Activated CD4-positive, alpha-beta T cell treated with anti-CD3 and anti-CD28 coated beads, Interleukin-2, amount 10 ng/mL, durations not matched to agents 24 days and 14 days (primary cell): ENCODE measurements at regions of chr16 and their contacts with region 1.

Region 1: GRCh38 chr16:3503523-3503922 is 2.7 kb downstream of the CLUAP1 start:
- DNase-seq: peak; percentile 92
- H3K4me3 Mint-ChIP-seq: peak overlapping the region; percentile 80
- H3K27ac Mint-ChIP-seq: peak overlapping the region; percentile 97
- H3K4me1 Mint-ChIP-seq: peaks cover 57% of the 10 kb centered on the region
- H3K27me3 Mint-ChIP-seq: no peaks in the 10 kb centered on the region

Region 2: DNA sequence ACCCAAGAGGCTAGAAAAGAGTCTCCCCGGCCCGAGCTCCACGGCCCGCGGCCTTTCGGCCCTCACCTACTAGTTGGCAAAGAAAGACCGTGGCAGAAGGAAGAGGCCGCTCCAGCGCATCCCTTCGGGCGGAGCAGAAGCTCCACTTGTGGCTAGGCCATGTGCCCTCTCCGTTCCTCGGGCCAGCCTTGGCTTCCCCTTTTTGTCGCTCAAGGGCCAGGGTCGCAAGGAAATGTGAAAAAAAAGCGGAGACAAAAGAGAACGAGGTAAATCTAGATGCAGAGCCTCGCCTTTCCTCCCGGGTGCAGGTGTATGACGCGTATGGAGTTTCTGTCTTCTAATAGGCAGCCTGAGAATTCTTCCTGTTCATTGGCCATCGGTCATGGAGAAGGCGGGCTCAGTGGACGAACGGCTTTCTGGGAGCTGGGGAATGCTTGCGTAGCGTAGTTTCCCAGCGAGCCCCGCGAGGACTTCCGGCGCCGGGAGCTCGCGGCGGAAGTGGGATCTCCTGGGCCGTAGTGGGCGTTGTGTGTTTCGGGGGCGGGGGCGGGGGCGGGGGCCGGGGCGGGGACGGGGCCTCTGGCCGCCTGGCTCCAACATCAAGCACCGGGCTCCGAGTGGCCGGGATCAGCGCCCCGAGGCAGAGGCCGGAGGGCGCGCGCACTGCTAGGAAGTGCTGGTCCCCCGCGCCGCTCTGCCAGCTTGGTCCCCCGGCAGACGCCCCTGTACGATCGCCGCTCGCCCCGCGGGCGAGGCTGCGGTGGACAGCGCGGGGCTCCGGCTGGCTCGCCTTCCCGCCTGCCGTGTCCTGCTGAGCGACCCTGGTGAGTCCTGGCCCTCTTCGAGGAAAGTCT is 368.7 kb before region 1 on chr16 and contains the start of gene ZNF213:
- intact Hi-C with region 1: loop called (anchors 5 kb)
- DNase-seq: peak; percentile 98
- H3K4me3 Mint-ChIP-seq: peak within 1 kb of the TSS; percentile 99
- H3K27ac Mint-ChIP-seq: peak within 1 kb of the TSS; percentile 97
- H3K4me1 Mint-ChIP-seq: peaks cover 26% of the 10 kb centered on the region
- H3K27me3 Mint-ChIP-seq: no peaks in the 10 kb centered on the region
- total RNA-seq, gene ZNF213: 9.5 and 10.6 TPM in 2 replicates

Region 3: DNA sequence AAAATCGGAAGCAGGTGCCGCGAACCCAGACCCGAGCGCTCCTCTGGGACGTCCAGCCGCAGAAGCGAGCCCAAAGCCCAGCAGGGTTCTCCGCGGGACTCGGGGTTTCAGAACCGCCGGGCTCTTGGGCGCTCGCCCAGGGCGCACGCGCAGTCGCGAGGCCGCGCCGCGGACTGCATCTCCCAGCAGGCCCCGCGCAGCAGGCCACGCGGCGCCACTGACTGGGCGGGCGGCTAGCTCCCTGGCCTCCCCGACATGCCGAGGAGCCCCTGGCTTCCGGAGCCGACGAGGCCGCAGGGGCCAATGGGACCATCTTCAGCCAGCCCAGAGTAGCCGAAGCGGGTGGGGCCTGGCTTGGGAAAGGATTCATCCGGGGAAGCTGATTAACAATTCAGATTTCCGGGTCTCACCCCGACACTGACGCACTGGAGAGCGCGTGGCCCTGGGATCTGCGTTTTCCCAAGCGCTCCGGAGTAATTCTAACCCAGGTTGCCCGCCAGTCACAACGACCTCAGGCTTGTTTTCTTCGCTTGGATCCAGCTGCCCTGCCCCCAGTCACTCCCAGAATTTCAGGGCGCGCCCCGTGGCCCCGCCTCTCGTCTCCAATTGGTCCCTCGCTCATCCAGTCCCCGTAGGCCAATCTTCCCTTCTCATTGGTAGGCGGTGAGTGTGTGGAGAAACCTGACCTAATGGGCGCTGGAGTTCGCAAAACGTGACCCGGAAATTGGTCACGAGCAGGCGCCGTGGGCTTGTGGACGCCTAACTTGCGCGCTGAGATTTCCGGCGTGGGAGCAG is 220.6 kb before region 1 on chr16 and contains the start of gene ZNF263:
- intact Hi-C with region 1: loop called (anchors 2 kb)
- DNase-seq: peak; percentile 98
- H3K4me3 Mint-ChIP-seq: peak within 1 kb of the TSS; percentile 88
- H3K27ac Mint-ChIP-seq: peak within 1 kb of the TSS; percentile 98
- H3K4me1 Mint-ChIP-seq: peaks cover 18% of the 10 kb centered on the region
- H3K27me3 Mint-ChIP-seq: peaks cover 4% of the 10 kb centered on the region
- total RNA-seq, gene ZNF263: 27.0 and 31.3 TPM in 2 replicates

Region 4: GRCh38 chr16:3400779-3401688 is 102.5 kb before region 1 on chr16 and contains the starts of genes ZNF174 and ZSCAN32:
- intact Hi-C with region 1: loop called (anchors 5 kb)
- DNase-seq: peak; percentile 100
- H3K4me3 Mint-ChIP-seq: peak within 1 kb of the TSS; percentile 90
- H3K27ac Mint-ChIP-seq: peak within 1 kb of the TSS; percentile 86
- H3K4me1 Mint-ChIP-seq: peaks cover 20% of the 10 kb centered on the region
- H3K27me3 Mint-ChIP-seq: no peaks in the 10 kb centered on the region
- total RNA-seq, gene ZNF174: 10.1 and 11.4 TPM in 2 replicates
- total RNA-seq, gene ZSCAN32: 16.8 and 17.9 TPM in 2 replicates

Region 5: DNA sequence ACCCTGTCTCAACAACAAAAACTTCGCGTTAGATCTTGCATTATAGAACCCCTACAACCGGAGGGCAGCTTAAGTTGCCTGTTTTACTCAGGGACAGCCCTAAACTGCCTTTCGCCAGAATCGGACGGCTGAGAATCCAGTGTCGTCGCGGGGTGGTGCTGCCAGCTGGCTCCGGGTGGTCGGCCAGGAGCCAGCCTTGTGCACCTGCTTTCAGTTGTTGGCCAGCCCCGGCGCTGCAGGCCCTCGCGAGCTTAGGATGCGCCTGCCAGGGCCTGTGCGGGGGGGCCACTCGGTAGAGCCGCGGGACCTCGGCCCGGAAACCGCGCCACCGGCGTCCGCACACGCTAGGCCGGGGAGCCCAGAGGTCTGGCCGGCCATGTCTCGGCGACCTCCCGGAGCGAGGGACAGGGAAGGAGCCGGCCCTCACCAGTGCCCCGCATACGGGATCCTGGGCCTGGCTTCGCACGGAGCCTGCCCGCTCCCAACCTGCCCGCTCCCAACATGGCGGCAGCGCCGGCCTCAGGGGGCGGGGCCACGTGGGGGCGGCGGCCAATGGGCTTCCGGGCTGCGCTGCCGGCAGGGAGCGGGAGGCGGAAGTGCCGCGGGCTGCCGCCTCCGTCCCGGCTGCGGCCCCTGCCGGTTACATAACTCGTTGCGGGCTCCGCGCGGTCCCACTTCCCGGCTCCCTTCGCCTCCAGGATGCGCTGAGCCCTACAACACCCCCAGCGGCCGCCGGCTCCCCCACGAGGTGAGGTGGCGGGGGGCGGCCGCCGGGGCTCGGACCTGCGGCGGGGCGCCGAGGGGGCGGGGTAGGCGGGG is 45.9 kb before region 1 on chr16:
- intact Hi-C with region 1: loop called (anchors 2 kb)
- DNase-seq: peak; percentile 97
- H3K4me3 Mint-ChIP-seq: peak overlapping the region; percentile 85
- H3K27ac Mint-ChIP-seq: peak overlapping the region; percentile 84
- H3K4me1 Mint-ChIP-seq: peaks cover 39% of the 10 kb centered on the region
- H3K27me3 Mint-ChIP-seq: no peaks in the 10 kb centered on the region

Region 6: DNA sequence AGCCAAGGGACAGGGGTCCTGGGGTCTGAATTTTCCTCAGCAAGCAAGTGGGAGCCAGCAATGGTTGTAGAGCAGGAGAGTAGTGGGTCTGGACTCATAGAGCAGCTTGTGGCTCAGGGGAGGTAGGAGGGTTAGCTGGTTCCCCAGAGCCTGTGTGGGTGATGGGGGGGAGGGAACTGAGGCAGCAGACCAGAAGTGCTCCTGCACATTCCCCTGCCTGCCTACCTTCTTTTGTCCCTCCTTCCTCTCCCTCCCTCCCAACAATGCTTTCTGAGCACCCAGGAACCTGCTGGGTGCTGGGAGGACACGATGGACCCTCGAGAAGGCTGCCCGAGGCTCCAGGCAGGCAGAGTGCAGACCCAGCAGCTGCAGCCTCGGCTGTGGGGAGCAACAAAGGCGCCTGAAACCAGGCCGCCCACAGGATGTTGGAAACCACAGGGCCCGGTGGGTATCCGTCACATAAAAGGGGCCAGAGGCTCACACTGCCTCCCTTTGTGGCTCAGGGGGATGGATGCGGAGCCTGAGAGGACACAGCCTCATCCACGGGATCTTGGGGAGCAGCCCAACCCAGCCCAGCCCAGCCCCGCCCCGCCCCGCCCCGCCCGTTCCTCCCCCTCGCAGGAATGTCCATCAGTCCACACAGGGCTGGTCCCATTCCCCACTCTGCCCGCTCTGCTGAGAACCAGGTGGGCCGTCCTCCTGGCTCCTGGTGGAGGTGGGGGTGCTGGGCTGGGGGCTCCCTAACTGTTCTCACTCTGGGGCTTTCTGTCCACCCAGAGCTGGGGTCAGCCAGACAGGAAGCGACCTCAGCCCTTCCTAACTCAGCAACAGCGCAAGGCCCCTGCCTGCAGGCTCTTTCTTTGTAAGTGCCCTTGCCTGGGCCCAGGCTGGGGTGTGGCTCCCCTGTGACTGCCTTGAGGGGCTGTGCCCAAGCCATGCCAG is 75.4 kb after region 1 on chr16:
- intact Hi-C with region 1: loop called (anchors 5 kb)
- DNase-seq: peak; percentile 91
- H3K4me3 Mint-ChIP-seq: peak overlapping the region; percentile 98
- H3K27ac Mint-ChIP-seq: peak overlapping the region; percentile 96
- H3K4me1 Mint-ChIP-seq: peaks cover 36% of the 10 kb centered on the region
- H3K27me3 Mint-ChIP-seq: no peaks in the 10 kb centered on the region

Region 7: GRCh38 chr16:3602320-3602653 is 98.8 kb after region 1 on chr16:
- intact Hi-C with region 1: no loop called
- DNase-seq: no peak
- H3K4me3 Mint-ChIP-seq: no peak overlapping the region
- H3K27ac Mint-ChIP-seq: no peak overlapping the region
- H3K4me1 Mint-ChIP-seq: peaks cover 9% of the 10 kb centered on the region
- H3K27me3 Mint-ChIP-seq: no peaks in the 10 kb centered on the region